ENCODE measurements at regions of chr10 and their contacts with region 1.

Region 1: DNA sequence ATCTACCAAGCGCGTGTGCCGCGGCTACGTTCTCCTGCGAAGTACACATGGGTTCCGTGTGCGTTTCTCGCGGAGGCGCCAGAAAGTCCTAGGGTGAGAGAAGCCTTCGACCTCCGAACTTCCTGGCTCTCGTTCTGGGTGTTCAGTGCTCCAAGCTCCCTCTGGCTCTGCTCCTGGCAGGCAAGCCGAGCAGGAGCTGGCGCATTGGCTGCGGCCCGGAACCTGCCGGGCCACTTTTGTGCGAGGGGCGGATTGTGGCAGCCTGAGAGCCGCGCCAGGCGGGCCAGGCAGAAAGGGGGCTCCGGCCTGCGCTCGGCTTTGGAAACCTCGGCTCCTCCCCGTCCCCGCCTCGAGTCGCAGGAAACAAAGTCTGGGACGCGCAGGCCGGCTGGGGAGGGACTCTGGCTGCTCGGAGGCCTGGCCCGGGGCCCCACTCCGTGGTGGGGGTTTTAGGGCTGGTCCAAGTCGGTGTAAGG is 9.6 kb downstream of the EMX2 start:
- DNase-seq: no peak
- ATAC-seq: no peak
- H3K4me3 ChIP-seq: no peak overlapping the region
- H3K27ac ChIP-seq: no peak overlapping the region
- H3K4me1 ChIP-seq: no peaks in the 10 kb centered on the region
- H3K27me3 ChIP-seq: peaks cover 24 to 26% of the 10 kb centered on the region in 2 experiments
- CTCF ChIP-seq: no peak
- EP300 ChIP-seq: no peak
- POLR2A ChIP-seq: no peak
- RAD21 ChIP-seq: no peak

Region 2: DNA sequence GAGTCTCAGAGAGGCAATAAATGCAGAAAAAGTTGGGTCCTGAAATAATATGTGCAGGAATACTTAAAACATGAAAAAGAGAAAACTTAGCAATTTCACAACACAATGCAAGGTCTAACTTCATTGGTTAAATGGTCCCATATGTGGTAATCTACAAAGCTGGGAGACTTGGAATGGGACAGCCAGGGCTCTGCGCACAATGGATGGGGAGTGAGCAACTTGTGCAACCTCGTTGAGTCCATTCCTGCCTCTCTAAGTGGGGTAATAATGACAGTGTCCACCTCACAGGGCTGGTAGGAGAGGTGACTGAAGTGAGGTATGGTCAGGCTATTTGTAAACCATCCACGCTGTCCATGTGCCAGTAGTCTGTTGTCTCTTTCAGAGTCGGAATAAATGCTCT is 21.4 kb before region 1 on chr10:
- CTCF ChIA-PET with region 1: no interaction called
- POLR2A ChIA-PET with region 1: no interaction called
- RAD21 ChIA-PET with region 1: no interaction called
- SMC1A ChIA-PET with region 1: no interaction called
- in situ Hi-C with region 1: no loop called
- intact Hi-C with region 1: no loop called
- DNase-seq: no peak
- ATAC-seq: no peak
- H3K4me3 ChIP-seq: no peak overlapping the region
- H3K27ac ChIP-seq: no peak overlapping the region
- H3K4me1 ChIP-seq: no peaks in the 10 kb centered on the region
- H3K27me3 ChIP-seq: peaks cover 12 to 24% of the 10 kb centered on the region in 2 experiments
- CTCF ChIP-seq: no peak
- EP300 ChIP-seq: no peak
- POLR2A ChIP-seq: no peak
- RAD21 ChIP-seq: no peak

Region 3: GRCh38 chr10:117762819-117763172 is 210.6 kb after region 1 on chr10:
- CTCF ChIA-PET with region 1: no interaction called
- POLR2A ChIA-PET with region 1: no interaction called
- RAD21 ChIA-PET with region 1: no interaction called
- SMC1A ChIA-PET with region 1: no interaction called
- in situ Hi-C with region 1: no loop called
- intact Hi-C with region 1: loop called (anchors 5 kb)
- DNase-seq: no peak
- ATAC-seq: no peak
- H3K4me3 ChIP-seq: no peak overlapping the region
- H3K27ac ChIP-seq: no peak overlapping the region
- H3K4me1 ChIP-seq: no peaks in the 10 kb centered on the region
- H3K27me3 ChIP-seq: peaks cover 0 to 2% of the 10 kb centered on the region in 2 experiments; a peak in 2 of 4 replicates
- CTCF ChIP-seq: no peak
- EP300 ChIP-seq: no peak
- POLR2A ChIP-seq: no peak
- RAD21 ChIP-seq: no peak